Gastrocnemius medialis (tissue), 4 donors: ENCODE measurements at regions of chr7 and their contacts with region 1.

Region 1: GRCh38 chr7:47239931-47240421 is 341.9 kb downstream of the TNS3 start:
- DNase-seq: no peak
- ATAC-seq: peak; percentile 24 to 58
- H3K4me3 ChIP-seq: no peak overlapping the region
- H3K27ac ChIP-seq: no peak overlapping the region
- H3K4me1 ChIP-seq: peaks cover 0 to 23% of the 10 kb centered on the region in 2 donors
- H3K27me3 ChIP-seq: no peaks in the 10 kb centered on the region
- CTCF ChIP-seq: no peak
- POLR2A ChIP-seq: no peak

Region 2: DNA sequence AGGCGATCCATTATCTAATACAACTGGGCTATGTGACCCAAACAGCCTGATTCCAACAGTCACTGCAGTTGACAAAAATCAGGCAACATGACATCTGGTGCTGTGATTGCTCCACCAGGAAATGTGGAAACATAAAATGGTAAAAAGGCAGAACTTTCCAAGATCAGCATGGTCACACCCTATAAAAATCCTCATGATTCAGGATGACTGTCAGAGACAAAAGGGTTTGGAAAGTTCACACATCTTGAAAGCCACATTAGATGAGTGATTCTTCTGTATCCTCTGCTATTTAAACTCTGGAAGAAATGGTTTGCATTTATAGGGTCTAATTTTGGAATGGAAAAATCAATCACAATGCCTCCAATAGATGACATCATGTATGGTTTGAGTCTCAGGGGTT is 656.3 kb before region 1 on chr7:
- in situ Hi-C with region 1: no loop called
- intact Hi-C with region 1: loop called (anchors 10 kb)
- DNase-seq: peak in 1 of 2 donors; percentile 36
- ATAC-seq: peak; percentile 89 to 94
- H3K4me3 ChIP-seq: no peak overlapping the region
- H3K27ac ChIP-seq: peak overlapping the region in 3 of 4 donors; percentile 24 to 46 (median 30)
- H3K4me1 ChIP-seq: no peaks in the 10 kb centered on the region
- H3K27me3 ChIP-seq: no peaks in the 10 kb centered on the region
- CTCF ChIP-seq: no peak
- POLR2A ChIP-seq: no peak